Posterior cingulate gyrus (tissue), 11 donors: ENCODE measurements at regions of chr6 and their contacts with region 1.

Region 1: GRCh38 chr6:46626228-46626909 is 26.2 kb downstream of the CYP39A1 start:
- DNase-seq: no peak

Region 2: GRCh38 chr6:45105170-45105820 is 1521.1 kb before region 1 on chr6:
- intact Hi-C with region 1: no loop called
- DNase-seq: no peak

Region 3: GRCh38 chr6:46090115-46091079 is 536.0 kb before region 1 on chr6:
- intact Hi-C with region 1: loop called (anchors 10 kb)
- DNase-seq: peak; percentile 38 to 93 (median 68)

Region 4: GRCh38 chr6:46221222-46221793 is 405.1 kb before region 1 on chr6:
- intact Hi-C with region 1: loop called (anchors 5 kb)
- DNase-seq: no peak

Region 5: GRCh38 chr6:46419576-46420002 is 206.8 kb before region 1 on chr6:
- intact Hi-C with region 1: loop called (anchors 1 kb)
- DNase-seq: peak in 8 of 10 donors; percentile 32 to 89 (median 66)

Region 6: GRCh38 chr6:46491628-46492547 is 134.5 kb before region 1 on chr6:
- intact Hi-C with region 1: loop called (anchors 5 kb)
- DNase-seq: peak; percentile 49 to 97 (median 75)